ENCODE measurements at regions of chr1 and their contacts with region 1.

Region 1: DNA sequence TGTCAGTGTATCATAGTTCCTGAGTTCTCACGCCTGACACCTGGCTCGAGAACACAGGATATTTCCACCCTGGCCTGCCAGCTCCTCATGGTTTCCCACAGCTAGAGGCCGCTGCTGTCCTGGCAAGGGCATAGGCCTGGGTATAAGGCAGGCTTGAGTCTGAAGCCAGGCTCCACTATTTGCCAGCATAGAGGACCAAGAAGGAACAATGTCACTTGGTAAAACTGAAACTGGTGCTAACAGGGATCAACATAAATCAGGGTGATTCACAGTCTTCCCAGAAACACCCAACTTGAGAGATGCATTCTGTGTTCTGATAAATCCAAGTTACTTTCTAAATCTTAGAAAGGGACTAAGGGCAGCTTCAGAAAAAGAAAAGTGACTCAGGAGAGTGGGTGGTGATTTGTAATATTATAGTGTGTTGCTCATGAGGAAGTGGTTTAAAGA is 6.9 kb upstream of the S100A2 start:
- DNase-seq: peak; percentile 88
- ATAC-seq: peak; percentile 91

Region 2: GRCh38 chr1:153360190-153360927 is 212.2 kb before region 1 on chr1:
- intact Hi-C with region 1: loop called (anchors 5 kb)
- DNase-seq: peak; percentile 50
- ATAC-seq: no peak

Region 3: GRCh38 chr1:153532769-153533599 is 39.6 kb before region 1 on chr1:
- intact Hi-C with region 1: loop called (anchors 1 kb)
- DNase-seq: peak; percentile 92
- ATAC-seq: peak; percentile 62

Region 4: DNA sequence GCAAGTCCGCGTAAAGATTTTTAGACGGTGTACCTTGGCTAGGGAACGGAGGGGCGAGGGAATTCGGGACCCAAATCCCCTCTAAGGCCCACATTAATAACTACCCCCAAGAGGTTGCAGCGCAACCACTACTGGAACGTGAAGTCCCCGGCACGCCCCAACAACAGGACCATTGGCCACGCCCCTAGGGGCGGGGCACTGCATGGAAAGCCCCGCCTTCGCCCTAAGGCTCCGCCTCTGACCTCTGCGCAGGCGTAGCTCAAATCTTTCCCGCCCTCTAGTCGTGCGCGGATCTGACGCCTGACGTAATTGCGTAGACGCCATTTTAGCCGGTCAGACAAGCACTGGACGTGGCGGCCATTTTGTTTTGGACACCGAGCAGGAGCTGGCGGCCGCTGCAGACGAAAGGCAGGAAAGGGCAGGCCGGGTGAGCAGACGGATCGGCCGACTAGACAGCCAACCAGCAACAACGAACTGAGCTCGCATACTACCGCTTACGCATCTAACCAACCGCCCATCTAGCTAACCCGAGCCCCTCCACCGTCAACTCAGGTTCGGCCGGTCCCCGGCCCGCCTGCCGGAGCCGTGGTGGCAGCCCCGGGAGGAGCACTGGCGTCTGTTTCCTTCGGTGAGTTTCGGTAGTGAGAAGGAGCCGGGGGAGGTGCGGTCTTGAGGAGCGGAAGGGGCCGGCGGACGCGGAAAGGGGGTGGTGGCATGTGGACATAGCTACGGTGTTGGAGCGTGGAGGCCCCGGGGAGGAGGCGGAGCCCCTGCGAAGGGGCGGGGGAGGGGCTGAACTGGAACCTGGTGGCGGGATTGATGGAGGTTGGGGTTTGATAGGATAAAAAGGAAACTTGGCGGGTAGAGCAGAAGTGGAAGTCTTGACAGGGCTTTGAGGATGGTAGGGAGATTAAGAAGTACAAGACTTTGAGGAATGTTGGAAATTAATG is 61.4 kb after region 1 on chr1 and contains the start of gene CHTOP:
- intact Hi-C with region 1: loop called (anchors 5 kb)
- DNase-seq: peak; percentile 98
- ATAC-seq: peak; percentile 96
- total RNA-seq, gene CHTOP: 72.1 TPM

Region 5: GRCh38 chr1:153670859-153671627 is 98.5 kb after region 1 on chr1 and contains the start of gene ILF2:
- intact Hi-C with region 1: loop called (anchors 5 kb)
- DNase-seq: peak; percentile 97
- ATAC-seq: peak; percentile 97
- total RNA-seq, gene ILF2: 60.4 TPM

Measured in Right ventricle myocardium inferior (tissue), 1 donor.